ENCODE measurements at regions of chr2 and their contacts with region 1.

Region 1: GRCh38 chr2:23824777-23825212 is 102.1 kb downstream of the ATAD2B start:
- DNase-seq: no peak
- H3K4me3 ChIP-seq: no peak overlapping the region
- H3K27ac ChIP-seq: no peak overlapping the region
- H3K27me3 ChIP-seq: no peaks in the 10 kb centered on the region
- CTCF ChIP-seq: peak; percentile 76

Region 2: GRCh38 chr2:23692851-23693605 is 131.8 kb before region 1 on chr2:
- CTCF ChIA-PET with region 1: no interaction called
- POLR2A ChIA-PET with region 1: no interaction called
- DNase-seq: no peak
- H3K4me3 ChIP-seq: no peak overlapping the region
- H3K27ac ChIP-seq: no peak overlapping the region
- H3K27me3 ChIP-seq: no peaks in the 10 kb centered on the region
- CTCF ChIP-seq: no peak

Region 3: DNA sequence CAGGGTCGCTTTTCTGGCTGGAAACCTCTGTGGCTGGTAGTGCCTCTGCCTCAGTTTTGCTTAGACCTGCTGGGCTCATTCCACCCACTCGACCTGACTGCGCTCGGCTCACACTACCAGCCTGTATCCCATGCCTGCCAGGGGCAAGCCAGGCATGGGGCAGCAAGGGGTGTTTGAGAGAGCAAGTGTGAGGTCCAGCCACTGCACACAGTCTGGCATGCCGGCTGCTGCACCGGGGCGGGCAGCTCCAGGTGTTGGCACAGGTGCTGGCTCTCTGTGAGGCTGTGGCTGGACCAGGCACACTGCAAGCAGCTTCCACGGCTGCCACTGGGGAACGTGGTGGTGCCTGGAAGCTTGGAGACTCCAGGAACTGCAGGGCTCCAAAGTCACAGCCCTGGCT is 11.2 kb after region 1 on chr2:
- CTCF ChIA-PET with region 1: interaction called, 15 read pairs
- POLR2A ChIA-PET with region 1: no interaction called
- DNase-seq: no peak
- H3K4me3 ChIP-seq: no peak overlapping the region
- H3K27ac ChIP-seq: no peak overlapping the region
- H3K27me3 ChIP-seq: no peaks in the 10 kb centered on the region
- CTCF ChIP-seq: no peak

Region 4: GRCh38 chr2:23926750-23927571 is 102.2 kb after region 1 on chr2 and contains the start of gene ATAD2B:
- CTCF ChIA-PET with region 1: interaction called, 63 read pairs
- POLR2A ChIA-PET with region 1: interaction called, 10 read pairs
- DNase-seq: peak; percentile 85
- H3K4me3 ChIP-seq: peak within 1 kb of the TSS; percentile 90
- H3K27ac ChIP-seq: peak within 1 kb of the TSS; percentile 98
- H3K27me3 ChIP-seq: no peaks in the 10 kb centered on the region
- CTCF ChIP-seq: peak; percentile 75
- polyA plus RNA-seq, gene ATAD2B: 4.5 and 6.0 TPM in 2 replicates

Region 5: GRCh38 chr2:24084386-24085361 is 259.9 kb after region 1 on chr2 and contains the start of gene TP53I3:
- CTCF ChIA-PET with region 1: interaction called, 26 read pairs
- POLR2A ChIA-PET with region 1: interaction called, 3 read pairs
- DNase-seq: peak; percentile 74
- H3K4me3 ChIP-seq: peak within 1 kb of the TSS; percentile 73
- H3K27ac ChIP-seq: peak within 1 kb of the TSS; percentile 94
- H3K27me3 ChIP-seq: no peaks in the 10 kb centered on the region
- CTCF ChIP-seq: peak; percentile 76
- polyA plus RNA-seq, gene TP53I3: 44.6 and 55.2 TPM in 2 replicates

Region 6: DNA sequence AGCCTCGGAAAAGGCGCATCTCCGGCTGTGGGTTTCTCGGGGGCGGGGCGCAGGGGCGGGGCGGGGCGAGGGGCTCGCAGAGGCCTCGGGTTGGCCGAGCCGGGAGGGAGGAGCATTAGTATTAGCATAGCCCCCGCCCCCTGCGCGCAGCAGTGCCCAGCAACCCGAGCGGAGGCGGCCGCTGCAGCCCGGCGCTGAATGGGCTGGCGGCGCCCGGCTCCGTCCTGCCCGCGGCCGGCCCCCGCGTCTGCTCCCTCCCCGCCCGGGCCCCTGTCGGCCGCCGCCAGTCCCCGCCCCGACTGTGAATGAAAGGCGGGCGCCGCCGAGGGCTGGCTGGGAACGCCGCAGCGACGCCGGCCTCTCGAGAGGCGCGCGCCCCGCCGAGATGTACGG is 1217.1 kb after region 1 on chr2 and contains the start of gene EFR3B:
- CTCF ChIA-PET with region 1: no interaction called
- POLR2A ChIA-PET with region 1: no interaction called
- DNase-seq: peak; percentile 73
- H3K4me3 ChIP-seq: peak within 1 kb of the TSS; percentile 63
- H3K27ac ChIP-seq: no peak within 1 kb of the TSS
- H3K27me3 ChIP-seq: peaks cover 29% of the 10 kb centered on the region
- CTCF ChIP-seq: no peak
- polyA plus RNA-seq, gene EFR3B: 0.09 and 0.14 TPM in 2 replicates

Measured in AG04450 (cell line).